Activated CD4-positive, alpha-beta T cell treated with anti-CD3 and anti-CD28 coated beads, Interleukin-2, amount 10 ng/mL, durations not matched to agents 7 days and 5 days (primary cell): ENCODE measurements at regions of chr10 and their contacts with region 1.

Region 1: GRCh38 chr10:7697304-7697875 is 5.7 kb upstream of the ITIH2 start:
- DNase-seq: no peak
- H3K4me3 Mint-ChIP-seq: no peak overlapping the region
- H3K27ac Mint-ChIP-seq: no peak overlapping the region
- H3K4me1 Mint-ChIP-seq: no peaks in the 10 kb centered on the region
- H3K27me3 Mint-ChIP-seq: peaks cover 1% of the 10 kb centered on the region

Region 2: GRCh38 chr10:7561216-7561893 is 136.0 kb before region 1 on chr10:
- CTCF ChIA-PET with region 1: no interaction called
- POLR2A ChIA-PET with region 1: no interaction called
- DNase-seq: no peak
- H3K4me3 Mint-ChIP-seq: no peak overlapping the region
- H3K27ac Mint-ChIP-seq: no peak overlapping the region
- H3K4me1 Mint-ChIP-seq: no peaks in the 10 kb centered on the region
- H3K27me3 Mint-ChIP-seq: peaks cover 6% of the 10 kb centered on the region

Region 3: DNA sequence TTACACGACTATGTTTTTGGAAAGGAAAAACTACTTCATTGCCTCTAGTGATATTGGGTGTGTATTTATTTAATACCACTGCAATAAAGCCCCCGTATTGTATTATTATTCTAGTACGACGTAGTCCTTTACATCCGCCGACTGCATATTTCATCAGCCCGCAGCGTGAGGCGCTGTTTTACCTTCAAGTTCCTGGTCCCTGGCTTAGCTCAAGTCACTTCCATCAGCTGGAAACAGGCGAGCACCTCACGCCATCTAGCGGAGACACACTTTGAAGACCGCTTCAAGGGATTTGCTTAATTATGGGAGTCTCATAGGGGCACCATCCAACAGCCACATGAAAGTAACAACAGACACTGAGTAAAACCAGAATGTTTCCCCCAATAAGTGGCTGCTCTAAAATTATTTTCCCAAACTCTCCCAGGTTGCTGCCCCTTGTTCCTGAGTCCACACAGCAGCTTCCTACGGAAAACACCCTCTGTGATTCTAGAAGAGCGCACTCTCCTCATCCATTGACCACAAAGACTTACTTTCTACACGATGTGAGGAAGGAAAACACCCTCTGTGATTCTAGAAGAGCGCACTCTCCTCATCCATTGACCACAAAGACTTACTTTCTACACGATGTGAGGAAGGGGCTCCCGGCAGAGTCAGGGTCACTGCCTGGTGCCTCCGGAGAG is 10.0 kb before region 1 on chr10:
- CTCF ChIA-PET with region 1: interaction called, 11 read pairs
- POLR2A ChIA-PET with region 1: no interaction called
- DNase-seq: peak; percentile 87
- H3K4me3 Mint-ChIP-seq: no peak overlapping the region
- H3K27ac Mint-ChIP-seq: no peak overlapping the region
- H3K4me1 Mint-ChIP-seq: peaks cover 3% of the 10 kb centered on the region
- H3K27me3 Mint-ChIP-seq: peaks cover 15% of the 10 kb centered on the region